ENCODE measurements at regions of chrX and their contacts with region 1.

Region 1: DNA sequence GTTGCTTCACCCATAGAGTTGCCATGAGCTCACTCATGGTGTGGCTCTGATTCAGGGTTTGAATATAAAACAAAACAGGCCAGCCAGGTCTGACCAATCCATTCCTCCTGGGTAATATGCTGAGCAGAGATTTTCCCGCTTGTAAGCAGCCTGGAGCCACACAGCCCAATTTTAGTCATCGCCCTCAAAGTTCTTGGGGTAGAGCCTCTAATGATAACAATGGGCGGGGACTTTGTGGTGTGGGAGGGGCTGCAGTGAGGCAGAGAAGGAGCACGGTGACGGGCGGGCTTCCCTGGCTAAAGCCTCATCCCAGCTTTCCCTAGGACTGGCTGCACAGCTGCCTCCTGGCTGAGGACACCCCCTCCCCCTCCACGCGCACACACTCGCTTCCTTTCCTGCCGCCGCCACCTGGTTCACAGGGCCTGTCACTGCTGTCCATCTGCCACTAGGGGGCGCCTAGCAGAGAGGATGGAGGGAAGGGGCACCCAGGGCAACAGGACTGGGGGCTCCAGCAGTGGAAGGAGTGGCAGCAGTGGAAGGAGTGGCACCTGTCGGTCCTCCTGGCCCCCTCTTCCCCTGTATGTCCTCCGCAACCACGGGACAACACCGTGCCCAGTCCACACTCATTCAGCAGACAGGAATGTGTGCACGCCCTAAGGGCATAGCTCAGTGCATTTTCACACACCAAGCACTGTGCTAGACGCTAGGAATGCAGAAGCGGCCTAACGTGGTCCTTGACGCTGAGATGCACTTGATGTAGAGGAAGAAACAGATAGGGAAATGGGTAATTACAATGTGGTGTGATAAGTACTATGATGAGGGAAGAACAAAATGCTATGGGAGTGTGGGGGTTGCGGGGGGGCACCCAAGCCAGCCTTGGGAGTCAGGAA is 26.8 kb downstream of the PRPS1 start:
- DNase-seq: peak; percentile 49
- H3K4me3 ChIP-seq: no peak overlapping the region
- H3K27ac ChIP-seq: peak overlapping the region; percentile 42
- H3K4me1 ChIP-seq: peaks cover 12% of the 10 kb centered on the region
- H3K27me3 ChIP-seq: no peaks in the 10 kb centered on the region
- CTCF ChIP-seq: peak; percentile 74

Region 2: GRCh38 chrX:107576841-107577240 is 78.3 kb before region 1 on chrX:
- intact Hi-C with region 1: no loop called
- DNase-seq: no peak
- H3K4me3 ChIP-seq: no peak overlapping the region
- H3K27ac ChIP-seq: no peak overlapping the region
- H3K4me1 ChIP-seq: no peaks in the 10 kb centered on the region
- H3K27me3 ChIP-seq: no peaks in the 10 kb centered on the region
- CTCF ChIP-seq: no peak

Region 3: DNA sequence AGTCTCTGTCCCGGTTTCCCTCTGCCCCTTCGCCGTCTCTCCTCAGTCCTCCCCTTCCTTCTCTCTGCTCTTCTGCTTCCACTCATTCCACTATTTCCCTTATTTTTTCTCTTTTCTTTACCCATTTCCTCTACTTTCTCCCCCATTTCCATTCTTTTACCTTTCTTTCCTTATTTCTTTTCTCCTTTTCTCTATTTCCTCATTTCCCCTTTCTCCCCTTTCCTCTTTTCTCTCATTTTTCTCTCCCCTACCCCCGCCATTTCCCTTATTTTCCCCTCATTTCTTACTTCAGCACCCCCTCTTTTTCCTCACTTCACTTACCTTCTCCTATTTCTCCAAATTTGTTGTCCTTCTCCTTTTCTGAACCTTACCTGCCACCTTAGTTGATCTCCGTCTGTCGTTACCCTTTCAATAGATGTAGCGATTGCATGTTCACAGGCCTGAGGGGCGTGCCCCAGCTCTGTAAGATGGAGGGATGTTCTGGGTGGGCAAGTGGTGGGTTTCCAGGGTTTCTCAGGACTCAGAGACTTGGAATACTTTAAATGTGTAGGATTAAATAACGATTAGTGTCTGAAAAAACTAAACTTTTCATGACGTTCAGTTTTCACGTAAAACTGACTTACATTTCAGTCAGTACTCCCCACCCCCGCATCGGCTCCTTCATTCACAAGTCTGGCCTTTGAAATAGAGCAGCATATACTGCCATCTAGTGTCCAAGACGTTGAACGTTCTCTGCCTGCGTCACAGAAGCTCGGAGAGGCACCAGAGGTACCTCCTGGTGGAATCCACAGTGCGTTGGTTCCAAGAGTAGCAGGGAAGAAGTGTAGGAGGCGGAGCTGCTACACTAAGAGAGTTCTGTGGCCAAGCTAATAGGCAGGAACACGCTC is 121.8 kb after region 1 on chrX:
- intact Hi-C with region 1: loop called (anchors 5 kb)
- DNase-seq: peak; percentile 67
- H3K4me3 ChIP-seq: peak overlapping the region; percentile 73
- H3K27ac ChIP-seq: peak overlapping the region; percentile 87
- H3K4me1 ChIP-seq: peaks cover 20% of the 10 kb centered on the region
- H3K27me3 ChIP-seq: no peaks in the 10 kb centered on the region
- CTCF ChIP-seq: peak; percentile 73

Region 4: DNA sequence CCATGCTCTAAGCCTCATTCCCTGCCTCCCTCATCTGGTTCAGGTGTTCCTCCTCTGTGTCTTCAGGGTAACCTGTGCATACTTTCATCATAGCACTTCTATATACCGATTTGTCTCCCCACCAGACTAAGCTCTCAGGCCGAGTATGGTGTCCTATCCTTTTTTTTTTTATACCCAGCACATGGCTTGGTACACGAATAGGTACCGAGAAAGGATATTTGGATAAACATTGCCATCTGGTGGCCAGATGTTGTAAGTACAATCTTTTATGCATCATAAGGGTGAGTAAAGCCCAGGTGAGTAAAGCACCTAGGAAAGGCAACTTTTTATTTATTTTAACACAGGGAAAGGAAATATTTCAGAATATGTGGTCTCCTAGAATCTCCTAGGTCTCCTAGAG is 238.9 kb after region 1 on chrX:
- intact Hi-C with region 1: loop called (anchors 10 kb)
- DNase-seq: no peak
- H3K4me3 ChIP-seq: no peak overlapping the region
- H3K27ac ChIP-seq: no peak overlapping the region
- H3K4me1 ChIP-seq: no peaks in the 10 kb centered on the region
- H3K27me3 ChIP-seq: no peaks in the 10 kb centered on the region
- CTCF ChIP-seq: peak; percentile 58